ENCODE measurements at regions of chr1 and their contacts with region 1.

Region 1: GRCh38 chr1:33295450-33296081 is 25.3 kb downstream of the A3GALT2 start:
- DNase-seq: peak; percentile 92
- ATAC-seq: peak; percentile 92
- H3K4me3 Mint-ChIP-seq: no peak overlapping the region
- H3K27ac Mint-ChIP-seq: no peak overlapping the region
- H3K4me1 Mint-ChIP-seq: peaks cover 20% of the 10 kb centered on the region
- H3K27me3 Mint-ChIP-seq: no peaks in the 10 kb centered on the region

Region 2: GRCh38 chr1:33273406-33273805 is 22.2 kb before region 1 on chr1:
- CTCF ChIA-PET with region 1: interaction called, 19 read pairs
- DNase-seq: no peak
- ATAC-seq: peak; percentile 73
- H3K4me3 Mint-ChIP-seq: no peak overlapping the region
- H3K27ac Mint-ChIP-seq: peak overlapping the region; percentile 65
- H3K4me1 Mint-ChIP-seq: peaks cover 14% of the 10 kb centered on the region
- H3K27me3 Mint-ChIP-seq: no peaks in the 10 kb centered on the region

Region 3: GRCh38 chr1:33306648-33307493 is 11.3 kb after region 1 on chr1:
- CTCF ChIA-PET with region 1: interaction called, 24 read pairs
- DNase-seq: no peak
- ATAC-seq: no peak
- H3K4me3 Mint-ChIP-seq: no peak overlapping the region
- H3K27ac Mint-ChIP-seq: no peak overlapping the region
- H3K4me1 Mint-ChIP-seq: peaks cover 24% of the 10 kb centered on the region
- H3K27me3 Mint-ChIP-seq: peaks cover 14% of the 10 kb centered on the region

Region 4: DNA sequence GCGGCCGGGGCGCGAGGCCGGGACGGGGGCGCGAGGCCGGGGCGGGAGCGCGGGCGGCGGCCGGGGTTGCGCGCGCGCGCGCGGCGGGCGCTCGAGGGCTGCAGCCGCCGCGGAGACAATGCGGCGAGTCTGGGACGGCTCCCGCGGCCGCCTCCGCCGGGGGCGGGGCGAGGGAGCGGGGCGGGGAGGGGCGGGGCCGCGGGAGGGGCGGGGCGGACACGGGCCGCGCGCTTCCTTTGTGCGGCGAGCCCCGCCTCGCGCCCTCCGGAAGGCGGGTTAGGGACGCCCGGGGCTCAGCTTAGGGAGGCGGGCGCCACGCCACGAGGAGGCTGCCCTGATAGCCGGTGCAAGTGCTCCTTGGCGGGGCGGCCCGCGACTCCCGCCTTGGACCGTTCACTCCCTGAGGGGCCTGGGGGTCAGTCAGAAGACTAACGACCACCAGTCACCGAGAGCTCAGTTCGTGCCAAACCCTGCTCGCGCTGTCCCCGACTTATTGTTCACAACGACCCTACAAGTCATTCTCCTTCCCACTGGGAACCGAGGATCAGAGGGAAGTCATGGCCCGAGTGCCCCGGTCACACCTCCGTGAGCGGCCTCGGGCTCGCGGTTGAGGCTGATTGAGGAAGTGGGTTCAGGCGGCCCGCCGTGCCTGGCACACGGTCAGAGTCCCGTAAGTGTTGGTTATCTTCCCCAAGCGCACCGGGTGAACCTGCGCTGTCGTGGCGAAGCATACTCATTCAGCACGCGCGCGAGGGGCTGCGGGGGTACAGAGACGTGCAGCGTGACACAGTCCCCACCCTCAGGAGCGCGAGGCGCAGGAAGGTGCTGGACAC is 54.4 kb after region 1 on chr1:
- CTCF ChIA-PET with region 1: interaction called, 17 read pairs
- DNase-seq: peak; percentile 83
- ATAC-seq: peak; percentile 88
- H3K4me3 Mint-ChIP-seq: peak overlapping the region; percentile 86
- H3K27ac Mint-ChIP-seq: peak overlapping the region; percentile 91
- H3K4me1 Mint-ChIP-seq: peaks cover 43% of the 10 kb centered on the region
- H3K27me3 Mint-ChIP-seq: no peaks in the 10 kb centered on the region

Region 5: GRCh38 chr1:33367485-33368405 is 72.2 kb after region 1 on chr1:
- CTCF ChIA-PET with region 1: interaction called, 107 read pairs
- DNase-seq: peak; percentile 88
- ATAC-seq: peak; percentile 92
- H3K4me3 Mint-ChIP-seq: no peak overlapping the region
- H3K27ac Mint-ChIP-seq: no peak overlapping the region
- H3K4me1 Mint-ChIP-seq: no peaks in the 10 kb centered on the region
- H3K27me3 Mint-ChIP-seq: no peaks in the 10 kb centered on the region

Region 6: DNA sequence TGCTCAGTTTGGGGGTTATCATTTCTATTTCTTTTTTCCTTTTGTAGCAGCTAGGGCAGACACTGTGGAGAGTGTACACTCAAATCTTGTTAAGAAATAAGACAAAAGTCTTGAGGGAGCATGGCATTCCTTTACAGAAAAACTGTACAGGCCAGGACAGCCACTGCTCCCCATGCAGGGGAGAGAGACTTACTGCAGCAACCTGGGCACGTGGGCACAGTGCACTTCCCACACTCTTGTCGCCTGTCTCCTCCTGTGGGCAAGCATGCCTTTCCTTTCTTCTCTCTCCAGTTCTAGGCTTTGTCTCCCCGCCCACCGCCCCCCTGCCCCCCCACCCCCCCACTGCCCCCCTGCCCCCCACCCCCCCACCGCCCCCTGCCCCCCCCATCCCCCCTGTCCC is 83.4 kb after region 1 on chr1:
- CTCF ChIA-PET with region 1: no interaction called
- DNase-seq: no peak
- ATAC-seq: no peak
- H3K4me3 Mint-ChIP-seq: no peak overlapping the region
- H3K27ac Mint-ChIP-seq: no peak overlapping the region
- H3K4me1 Mint-ChIP-seq: peaks cover 21% of the 10 kb centered on the region
- H3K27me3 Mint-ChIP-seq: peaks cover 50% of the 10 kb centered on the region

Region 7: GRCh38 chr1:33430692-33431593 is 135.4 kb after region 1 on chr1 and contains the start of gene PHC2:
- CTCF ChIA-PET with region 1: no interaction called
- DNase-seq: peak; percentile 92
- ATAC-seq: peak; percentile 99
- H3K4me3 Mint-ChIP-seq: peak within 1 kb of the TSS; percentile 41
- H3K27ac Mint-ChIP-seq: no peak within 1 kb of the TSS
- H3K4me1 Mint-ChIP-seq: peaks cover 9% of the 10 kb centered on the region
- H3K27me3 Mint-ChIP-seq: peaks cover 40% of the 10 kb centered on the region
- total RNA-seq, gene PHC2: 36.4 to 43.0 TPM

Region 8: GRCh38 chr1:33472349-33472980 is 176.9 kb after region 1 on chr1 and contains the start of gene ZSCAN20:
- CTCF ChIA-PET with region 1: interaction called, 77 read pairs
- DNase-seq: peak; percentile 93
- ATAC-seq: peak; percentile 98
- H3K4me3 Mint-ChIP-seq: peak within 1 kb of the TSS; percentile 75
- H3K27ac Mint-ChIP-seq: peak within 1 kb of the TSS; percentile 72
- H3K4me1 Mint-ChIP-seq: peaks cover 33% of the 10 kb centered on the region
- H3K27me3 Mint-ChIP-seq: no peaks in the 10 kb centered on the region
- total RNA-seq, gene ZSCAN20: 3.3 to 4.0 TPM